GM10248 (cell line): ENCODE measurements at regions of chr2 and their contacts with region 1.

Region 1: GRCh38 chr2:98601532-98602132 is 6.7 kb downstream of the COA5 start:
- DNase-seq: peak; percentile 43
- CTCF ChIP-seq: peak; percentile 67

Region 2: GRCh38 chr2:98583816-98584618 is 17.6 kb before region 1 on chr2:
- CTCF ChIA-PET with region 1: interaction called, 11 read pairs
- POLR2A ChIA-PET with region 1: no interaction called
- DNase-seq: no peak
- CTCF ChIP-seq: no peak

Region 3: GRCh38 chr2:98664327-98664726 is 62.7 kb after region 1 on chr2:
- CTCF ChIA-PET with region 1: no interaction called
- POLR2A ChIA-PET with region 1: no interaction called
- DNase-seq: no peak
- CTCF ChIP-seq: no peak